ENCODE measurements at regions of chr4 and their contacts with region 1.

Region 1: DNA sequence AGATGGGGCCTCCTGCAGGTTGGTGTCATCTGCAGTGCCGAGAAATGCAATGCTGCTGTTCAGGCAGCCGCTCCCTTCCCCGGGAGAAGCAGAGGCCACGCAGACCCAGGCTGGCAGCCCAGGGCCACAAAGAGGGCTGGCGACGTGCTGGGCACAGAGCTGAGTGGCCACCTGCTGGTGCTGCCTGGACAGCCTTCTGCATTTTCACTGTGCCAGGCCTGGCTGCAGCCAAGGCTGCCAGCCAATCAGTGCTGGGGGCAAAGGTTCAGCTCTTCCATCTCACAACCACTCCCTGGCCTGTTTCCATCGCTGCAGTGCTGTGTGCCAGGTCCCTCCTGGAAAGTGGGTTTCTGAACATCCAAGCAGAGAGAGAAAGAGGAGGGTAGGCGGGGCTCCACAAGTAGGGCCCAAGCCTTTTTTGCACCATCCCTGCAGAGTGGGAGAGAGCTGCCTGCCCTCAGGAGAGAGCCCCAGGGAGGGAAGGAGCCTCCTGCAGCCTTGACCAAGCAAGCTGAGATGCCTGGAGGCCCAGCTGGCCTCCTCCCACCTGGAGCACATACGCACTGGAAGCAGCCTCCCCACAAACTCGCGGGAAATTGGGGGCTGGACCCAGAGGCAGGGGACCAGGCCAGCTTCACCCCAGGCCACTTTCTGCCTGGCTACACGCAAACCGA is 20.1 kb downstream of the ADRA2C start:
- DNase-seq: peak; percentile 90 to 94 (median 93)
- ATAC-seq: peak; percentile 95 to 98 (median 96)
- H3K4me3 ChIP-seq: no peak overlapping the region
- H3K27ac ChIP-seq: no peak overlapping the region
- H3K4me1 ChIP-seq: peaks cover 0 to 32% (median 11%) of the 10 kb centered on the region in 4 donors
- H3K27me3 ChIP-seq: no peaks in the 10 kb centered on the region
- CTCF ChIP-seq: peak; percentile 53 to 74 (median 66)
- POLR2A ChIP-seq: no peak

Region 2: DNA sequence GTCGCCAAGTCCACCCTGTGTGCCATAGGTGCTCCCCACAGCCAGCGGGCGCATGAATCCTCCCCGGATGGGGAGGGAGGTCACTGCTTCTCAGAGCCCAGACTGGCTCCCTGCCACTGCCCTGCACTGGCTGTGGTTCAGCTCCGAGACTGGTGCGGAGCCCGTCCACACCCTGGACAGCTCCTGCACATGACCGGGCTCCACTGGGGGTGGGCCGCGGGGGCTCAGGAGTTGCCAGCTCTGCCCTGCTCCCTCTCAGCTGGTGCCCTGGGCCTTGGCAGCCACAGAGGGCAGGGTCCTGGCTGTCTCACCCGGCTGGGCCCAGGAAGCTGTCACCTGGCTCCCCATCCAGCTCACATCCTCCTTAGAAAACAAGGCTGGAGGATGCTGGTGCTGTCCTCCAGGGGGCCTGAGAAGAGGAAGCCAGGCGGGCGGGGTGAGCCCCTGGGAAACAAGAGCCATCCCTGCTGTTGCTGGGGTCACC is 85.0 kb before region 1 on chr4:
- intact Hi-C with region 1: no loop called
- DNase-seq: peak in 1 of 3 donors; percentile 27
- ATAC-seq: no peak
- H3K4me3 ChIP-seq: no peak overlapping the region
- H3K27ac ChIP-seq: no peak overlapping the region
- H3K4me1 ChIP-seq: no peaks in the 10 kb centered on the region
- H3K27me3 ChIP-seq: no peaks in the 10 kb centered on the region
- CTCF ChIP-seq: no peak
- POLR2A ChIP-seq: no peak

Region 3: GRCh38 chr4:3827616-3828492 is 41.5 kb after region 1 on chr4:
- intact Hi-C with region 1: loop called in 1 of 2 experiments (anchors 5 kb)
- DNase-seq: peak; percentile 97 to 99 (median 99)
- ATAC-seq: peak; percentile 91 to 94 (median 92)
- H3K4me3 ChIP-seq: peak overlapping the region in 2 of 3 donors; percentile 26 to 27
- H3K27ac ChIP-seq: peak overlapping the region in 2 of 3 donors; percentile 62 to 78
- H3K4me1 ChIP-seq: peaks cover 0 to 27% (median 9%) of the 10 kb centered on the region in 4 donors
- H3K27me3 ChIP-seq: no peaks in the 10 kb centered on the region
- CTCF ChIP-seq: no peak
- POLR2A ChIP-seq: no peak

Measured in right lobe of liver (tissue), 6 donors.